Stomach (tissue), 19 donors: ENCODE measurements at regions of chr20 and their contacts with region 1.

Region 1: GRCh38 chr20:2851086-2851485 is 10.5 kb downstream of the VPS16 start:
- DNase-seq: no peak
- H3K4me3 ChIP-seq: no peak overlapping the region
- H3K27ac ChIP-seq: no peak overlapping the region
- H3K4me1 ChIP-seq: peaks cover 0 to 7% (median 3%) of the 10 kb centered on the region in 4 donors
- H3K27me3 ChIP-seq: no peaks in the 10 kb centered on the region
- CTCF ChIP-seq: no peak
- EP300 ChIP-seq: no peak
- POLR2A ChIP-seq: no peak

Region 2: DNA sequence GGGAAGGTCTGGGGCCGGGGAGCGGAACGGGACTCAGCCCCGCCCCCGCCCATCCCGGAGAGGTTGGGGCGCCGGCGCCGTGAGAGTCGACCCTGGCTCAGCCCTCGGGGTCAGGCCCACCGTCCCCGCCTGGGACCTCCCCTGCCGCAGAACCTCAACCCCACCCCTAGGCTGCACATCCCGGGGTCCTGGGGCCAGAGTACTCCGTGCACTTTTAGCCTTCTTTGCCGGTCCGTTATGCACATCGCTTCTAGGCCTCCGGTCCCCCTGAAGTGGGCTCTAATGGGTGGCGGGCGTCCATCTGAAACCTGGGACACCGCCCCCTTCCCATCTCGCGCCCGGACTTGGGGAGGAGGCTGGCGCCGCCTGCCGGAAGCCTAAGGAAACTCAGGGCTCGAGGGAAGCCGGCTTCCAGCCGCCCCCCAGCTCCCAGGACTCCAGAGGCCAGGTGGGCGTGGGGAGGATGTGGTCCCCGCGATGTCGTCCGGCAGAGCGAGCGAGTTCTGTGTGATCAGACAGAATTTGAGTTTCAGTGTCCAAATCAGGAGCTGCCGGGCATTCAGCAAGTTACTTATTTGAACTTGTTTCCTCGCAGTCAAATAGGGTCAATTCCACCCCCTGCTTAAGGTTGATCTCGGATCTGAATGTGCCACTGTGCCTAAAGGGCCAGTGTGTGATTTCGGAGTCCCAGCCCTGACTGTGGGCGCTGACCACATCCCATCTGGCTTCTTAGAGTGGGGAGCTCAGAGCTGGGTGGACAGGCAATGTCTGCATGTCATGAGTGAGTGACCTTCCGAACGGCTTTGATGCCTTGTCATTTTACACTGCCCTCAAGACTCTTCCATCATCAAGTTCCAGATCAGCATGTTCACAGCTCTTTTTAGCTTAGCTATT is 98.3 kb before region 1 on chr20:
- intact Hi-C with region 1: loop called (anchors 5 kb)
- DNase-seq: peak in 1 of 2 donors; percentile 75
- H3K4me3 ChIP-seq: peak overlapping the region; percentile 47 to 65 (median 53)
- H3K27ac ChIP-seq: peak overlapping the region in 2 of 5 donors; percentile 73 to 74
- H3K4me1 ChIP-seq: peaks cover 30 to 48% (median 39%) of the 10 kb centered on the region in 4 donors
- H3K27me3 ChIP-seq: peaks cover 0 to 82% (median 11%) of the 10 kb centered on the region in 3 donors
- CTCF ChIP-seq: peak in 5 of 7 experiments; percentile 28 to 55 (median 42)
- EP300 ChIP-seq: no peak
- POLR2A ChIP-seq: no peak

Region 3: DNA sequence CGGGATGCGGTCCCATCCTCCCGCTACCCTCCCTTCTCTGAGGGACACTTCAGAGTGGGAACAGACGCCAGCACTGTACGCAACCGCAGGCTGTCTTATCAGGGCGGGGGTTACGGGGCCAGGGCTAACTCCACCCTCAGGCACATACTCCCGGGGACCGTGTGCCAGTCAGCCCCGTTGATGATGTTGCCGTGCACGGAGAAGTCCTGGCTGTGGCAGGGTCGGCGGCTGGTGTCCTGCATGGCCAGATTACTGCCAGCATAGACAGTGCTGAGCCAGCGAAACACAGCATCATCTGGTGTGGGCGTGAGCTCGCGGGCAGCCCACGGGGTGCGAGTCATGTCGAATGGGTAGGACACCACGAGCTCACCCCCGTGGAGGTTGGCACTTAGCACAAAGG is 55.6 kb before region 1 on chr20:
- intact Hi-C with region 1: no loop called
- DNase-seq: no peak
- H3K4me3 ChIP-seq: no peak overlapping the region
- H3K27ac ChIP-seq: no peak overlapping the region
- H3K4me1 ChIP-seq: peaks cover 5 to 16% (median 14%) of the 10 kb centered on the region in 4 donors
- H3K27me3 ChIP-seq: peaks cover 4 to 86% (median 20%) of the 10 kb centered on the region in 3 donors
- CTCF ChIP-seq: no peak
- EP300 ChIP-seq: no peak
- POLR2A ChIP-seq: no peak

Region 4: GRCh38 chr20:2932498-2932897 is 81.4 kb after region 1 on chr20:
- intact Hi-C with region 1: no loop called
- DNase-seq: peak in 1 of 2 donors; percentile 29
- H3K4me3 ChIP-seq: no peak overlapping the region
- H3K27ac ChIP-seq: no peak overlapping the region
- H3K4me1 ChIP-seq: peaks cover 0 to 4% (median 2%) of the 10 kb centered on the region in 4 donors
- H3K27me3 ChIP-seq: no peaks in the 10 kb centered on the region
- CTCF ChIP-seq: no peak
- EP300 ChIP-seq: no peak
- POLR2A ChIP-seq: no peak